Activated CD4-positive, alpha-beta memory T cell treated with anti-CD3 and anti-CD28 coated beads, Interleukin-2, amount 10 ng/mL, durations not matched to agents 7 days and 5 days (primary cell): ENCODE measurements at regions of chr12 and their contacts with region 1.

Region 1: GRCh38 chr12:110501752-110502738 is at the starts of genes RAD9B and VPS29:
- DNase-seq: peak; percentile 100
- H3K4me3 Mint-ChIP-seq: peak within 1 kb of the TSS; percentile 94
- H3K27ac Mint-ChIP-seq: peak within 1 kb of the TSS; percentile 93
- H3K4me1 Mint-ChIP-seq: peaks cover 40% of the 10 kb centered on the region
- H3K27me3 Mint-ChIP-seq: no peaks in the 10 kb centered on the region
- total RNA-seq, gene RAD9B: 1.1 to 2.0 TPM
- total RNA-seq, gene VPS29: 129 to 137 TPM

Region 2: GRCh38 chr12:110371408-110372055 is 130.5 kb before region 1 on chr12:
- CTCF ChIA-PET with region 1: no interaction called
- POLR2A ChIA-PET with region 1: no interaction called
- DNase-seq: no peak
- H3K4me3 Mint-ChIP-seq: no peak overlapping the region
- H3K27ac Mint-ChIP-seq: no peak overlapping the region
- H3K4me1 Mint-ChIP-seq: no peaks in the 10 kb centered on the region
- H3K27me3 Mint-ChIP-seq: no peaks in the 10 kb centered on the region

Region 3: GRCh38 chr12:110468212-110469048 is 33.6 kb before region 1 on chr12 and contains the starts of genes FAM216A and GPN3:
- CTCF ChIA-PET with region 1: interaction called, 62 read pairs
- POLR2A ChIA-PET with region 1: interaction called, 100 read pairs
- DNase-seq: peak; percentile 98
- H3K4me3 Mint-ChIP-seq: peak within 1 kb of the TSS; percentile 92
- H3K27ac Mint-ChIP-seq: peak within 1 kb of the TSS; percentile 95
- H3K4me1 Mint-ChIP-seq: peaks cover 37% of the 10 kb centered on the region
- H3K27me3 Mint-ChIP-seq: no peaks in the 10 kb centered on the region
- total RNA-seq, gene FAM216A: 14.7 to 16.7 TPM
- total RNA-seq, gene GPN3: 18.9 to 21.6 TPM

Region 4: GRCh38 chr12:110577717-110578521 is 75.9 kb after region 1 on chr12:
- CTCF ChIA-PET with region 1: no interaction called
- POLR2A ChIA-PET with region 1: interaction called, 24 read pairs
- DNase-seq: peak; percentile 54
- H3K4me3 Mint-ChIP-seq: peak overlapping the region; percentile 67
- H3K27ac Mint-ChIP-seq: peak overlapping the region; percentile 98
- H3K4me1 Mint-ChIP-seq: peaks cover 66% of the 10 kb centered on the region
- H3K27me3 Mint-ChIP-seq: no peaks in the 10 kb centered on the region

Region 5: DNA sequence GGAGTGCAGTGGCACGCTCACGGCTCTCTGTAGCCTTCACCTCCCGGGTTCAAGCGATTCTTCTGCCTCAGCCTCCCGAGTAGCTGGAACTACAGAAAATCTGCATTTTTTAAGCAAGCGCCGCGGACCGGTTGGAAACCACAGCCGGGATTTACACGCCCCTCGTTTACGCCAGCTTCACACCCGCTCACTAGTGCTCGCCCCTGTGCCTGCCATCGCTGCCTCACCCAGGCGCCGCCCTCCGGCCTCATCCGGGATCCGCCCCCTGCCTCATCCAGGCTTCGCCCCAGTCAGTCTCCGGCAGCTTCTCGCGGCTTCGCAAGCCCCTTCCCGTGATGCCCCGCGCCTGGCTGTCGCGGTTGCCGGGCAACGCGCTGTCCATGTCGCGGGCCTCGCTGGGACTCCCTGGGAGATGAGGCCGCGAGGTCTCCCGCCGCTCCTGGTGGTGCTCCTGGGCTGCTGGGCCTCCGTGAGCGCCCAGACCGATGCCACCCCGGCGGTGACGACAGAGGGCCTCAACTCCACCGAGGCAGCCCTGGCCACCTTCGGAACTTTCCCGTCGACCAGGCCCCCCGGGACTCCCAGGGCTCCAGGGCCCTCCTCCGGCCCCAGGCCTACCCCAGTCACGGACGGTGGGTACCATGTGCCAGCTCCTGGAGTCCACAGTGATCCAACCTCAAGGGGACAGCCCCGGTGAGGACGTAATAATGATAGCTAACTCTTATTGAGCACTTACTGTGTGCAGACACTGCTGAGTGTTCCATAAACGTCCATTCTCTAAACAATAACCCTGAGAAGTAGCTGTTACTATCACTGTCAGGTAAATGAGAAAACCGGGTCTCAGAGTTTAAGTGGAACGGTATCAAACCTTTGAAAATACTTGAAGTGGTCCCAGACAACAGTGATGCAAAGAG is 112.0 kb after region 1 on chr12 and contains the start of gene TCTN1:
- CTCF ChIA-PET with region 1: no interaction called
- POLR2A ChIA-PET with region 1: interaction called, 20 read pairs
- DNase-seq: peak; percentile 98
- H3K4me3 Mint-ChIP-seq: peak within 1 kb of the TSS; percentile 81
- H3K27ac Mint-ChIP-seq: peak within 1 kb of the TSS; percentile 79
- H3K4me1 Mint-ChIP-seq: peaks cover 14% of the 10 kb centered on the region
- H3K27me3 Mint-ChIP-seq: no peaks in the 10 kb centered on the region
- total RNA-seq, gene TCTN1: 2.6 to 3.4 TPM

Region 6: GRCh38 chr12:110869026-110869425 is 367.0 kb after region 1 on chr12:
- CTCF ChIA-PET with region 1: no interaction called
- POLR2A ChIA-PET with region 1: no interaction called
- DNase-seq: no peak
- H3K4me3 Mint-ChIP-seq: no peak overlapping the region
- H3K27ac Mint-ChIP-seq: no peak overlapping the region
- H3K4me1 Mint-ChIP-seq: no peaks in the 10 kb centered on the region
- H3K27me3 Mint-ChIP-seq: peaks cover 13% of the 10 kb centered on the region